ENCODE measurements at regions of chr3 and their contacts with region 1.

Region 1: DNA sequence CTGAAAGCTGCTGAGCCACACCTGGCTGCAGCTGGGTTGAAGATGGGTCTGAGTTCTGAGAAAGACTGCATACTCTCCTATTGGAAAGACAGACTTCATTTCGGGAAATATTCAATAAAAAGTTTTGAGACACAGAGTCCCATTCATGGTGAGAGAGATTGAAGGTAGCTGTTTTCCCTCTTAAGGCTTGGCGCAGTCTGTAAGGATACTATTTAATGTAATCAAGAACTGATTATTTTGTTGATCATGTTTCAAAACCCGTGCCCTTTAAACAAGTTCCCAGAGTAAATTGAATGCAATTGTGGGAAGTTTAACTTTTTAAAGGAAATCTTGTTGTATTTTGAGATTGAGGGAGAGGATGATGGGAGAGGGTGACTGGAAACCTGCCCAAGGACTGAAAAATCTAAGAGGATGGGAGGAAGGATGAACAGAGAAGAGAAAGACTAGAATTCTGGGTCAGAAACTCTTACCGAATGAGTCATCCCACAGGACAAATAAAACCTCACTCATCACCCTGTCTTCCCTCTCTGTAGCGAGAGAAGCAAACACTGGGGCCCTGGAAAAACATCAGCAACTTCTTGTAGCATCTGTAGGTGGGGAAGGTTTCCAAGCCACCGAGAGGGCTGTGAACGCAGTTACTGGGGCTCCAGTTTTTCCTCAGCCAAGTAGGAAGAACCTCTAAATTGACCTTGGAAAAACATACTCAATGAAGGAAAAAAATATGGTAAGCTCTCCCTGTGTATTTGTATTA is 193.2 kb upstream of the TPRG1 start:
- DNase-seq: no peak
- ATAC-seq: no peak

Region 2: GRCh38 chr3:188627652-188628051 is 350.9 kb before region 1 on chr3:
- intact Hi-C with region 1: no loop called
- DNase-seq: no peak
- ATAC-seq: peak; percentile 84

Region 3: GRCh38 chr3:188646592-188646991 is 332.0 kb before region 1 on chr3:
- intact Hi-C with region 1: no loop called
- DNase-seq: no peak
- ATAC-seq: peak; percentile 93

Region 4: GRCh38 chr3:188788621-188789081 is 189.9 kb before region 1 on chr3:
- intact Hi-C with region 1: no loop called
- DNase-seq: no peak
- ATAC-seq: no peak

Region 5: GRCh38 chr3:189132231-189132707 is 153.7 kb after region 1 on chr3:
- intact Hi-C with region 1: loop called in 1 of 2 experiments (anchors 10 kb)
- DNase-seq: peak; percentile 44 to 61
- ATAC-seq: peak; percentile 87